ENCODE measurements at regions of chr17 and their contacts with region 1.

Region 1: GRCh38 chr17:82718986-82719685 is 2.6 kb downstream of the FN3KRP start:
- DNase-seq: no peak
- ATAC-seq: no peak
- H3K4me3 ChIP-seq: no peak overlapping the region
- H3K27ac ChIP-seq: no peak overlapping the region
- H3K4me1 ChIP-seq: peaks cover 13% of the 10 kb centered on the region
- H3K27me3 ChIP-seq: no peaks in the 10 kb centered on the region
- CTCF ChIP-seq: no peak

Region 2: GRCh38 chr17:82698065-82698973 is 20.8 kb before region 1 on chr17 and contains the start of gene RAB40B:
- intact Hi-C with region 1: no loop called
- DNase-seq: peak; percentile 99 to 100
- ATAC-seq: peak; percentile 98 to 99 (median 99)
- H3K4me3 ChIP-seq: peak within 1 kb of the TSS; percentile 88
- H3K27ac ChIP-seq: peak within 1 kb of the TSS; percentile 69
- H3K4me1 ChIP-seq: peaks cover 8% of the 10 kb centered on the region
- H3K27me3 ChIP-seq: no peaks in the 10 kb centered on the region
- CTCF ChIP-seq: no peak
- total RNA-seq, gene RAB40B: 12.6 to 42.9 (median 30.4) TPM

Region 3: DNA sequence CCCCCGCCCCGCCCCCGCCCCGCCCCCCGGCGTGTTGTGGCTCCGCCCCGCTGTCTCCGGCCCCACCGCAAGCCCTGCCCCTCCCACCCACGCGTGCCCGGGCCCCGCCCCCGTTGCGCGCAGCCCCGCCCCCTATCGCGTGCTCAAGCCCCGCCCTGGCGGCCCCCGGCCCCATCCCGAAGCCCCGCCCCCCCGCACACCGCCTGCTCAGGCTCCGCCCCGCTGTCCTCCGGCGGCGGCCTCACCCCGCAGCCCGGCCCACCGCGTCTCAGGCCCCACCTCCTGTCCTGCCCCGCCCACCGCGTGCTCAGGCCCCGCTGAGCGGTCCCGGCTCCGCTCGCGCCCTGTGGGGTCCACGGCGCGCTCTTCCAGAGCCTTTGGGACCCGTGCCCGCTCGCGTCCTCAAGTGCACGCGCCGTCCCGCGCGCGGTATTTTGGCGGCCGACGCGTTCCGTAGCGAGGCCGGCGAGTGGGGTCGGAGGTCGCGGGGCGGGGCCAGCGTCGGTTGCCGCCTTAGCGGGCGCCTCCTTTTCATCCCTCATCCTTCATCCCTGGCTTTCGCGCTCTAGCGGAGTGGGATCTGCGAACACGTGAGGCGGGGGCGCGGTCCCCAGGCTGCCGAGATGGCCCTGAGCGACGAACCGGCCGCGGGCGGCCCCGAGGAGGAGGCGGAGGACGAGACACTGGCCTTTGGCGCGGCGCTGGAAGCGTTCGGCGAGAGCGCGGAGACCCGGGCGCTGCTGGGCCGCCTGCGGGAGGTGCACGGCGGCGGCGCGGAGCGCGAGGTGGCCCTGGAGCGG is 32.6 kb after region 1 on chr17 and contains the start of gene TBCD:
- intact Hi-C with region 1: loop called in 1 of 2 experiments (anchors 2 kb)
- DNase-seq: peak; percentile 91 to 95
- ATAC-seq: peak; percentile 88 to 92 (median 91)
- H3K4me3 ChIP-seq: peak within 1 kb of the TSS; percentile 96
- H3K27ac ChIP-seq: peak within 1 kb of the TSS; percentile 90
- H3K4me1 ChIP-seq: peaks cover 6% of the 10 kb centered on the region
- H3K27me3 ChIP-seq: no peaks in the 10 kb centered on the region
- CTCF ChIP-seq: no peak
- total RNA-seq, gene TBCD: 34.7 to 46.1 (median 40.3) TPM